Naive thymus-derived CD4-positive, alpha-beta T cell (primary cell): ENCODE measurements at regions of chr9 and their contacts with region 1.

Region 1: DNA sequence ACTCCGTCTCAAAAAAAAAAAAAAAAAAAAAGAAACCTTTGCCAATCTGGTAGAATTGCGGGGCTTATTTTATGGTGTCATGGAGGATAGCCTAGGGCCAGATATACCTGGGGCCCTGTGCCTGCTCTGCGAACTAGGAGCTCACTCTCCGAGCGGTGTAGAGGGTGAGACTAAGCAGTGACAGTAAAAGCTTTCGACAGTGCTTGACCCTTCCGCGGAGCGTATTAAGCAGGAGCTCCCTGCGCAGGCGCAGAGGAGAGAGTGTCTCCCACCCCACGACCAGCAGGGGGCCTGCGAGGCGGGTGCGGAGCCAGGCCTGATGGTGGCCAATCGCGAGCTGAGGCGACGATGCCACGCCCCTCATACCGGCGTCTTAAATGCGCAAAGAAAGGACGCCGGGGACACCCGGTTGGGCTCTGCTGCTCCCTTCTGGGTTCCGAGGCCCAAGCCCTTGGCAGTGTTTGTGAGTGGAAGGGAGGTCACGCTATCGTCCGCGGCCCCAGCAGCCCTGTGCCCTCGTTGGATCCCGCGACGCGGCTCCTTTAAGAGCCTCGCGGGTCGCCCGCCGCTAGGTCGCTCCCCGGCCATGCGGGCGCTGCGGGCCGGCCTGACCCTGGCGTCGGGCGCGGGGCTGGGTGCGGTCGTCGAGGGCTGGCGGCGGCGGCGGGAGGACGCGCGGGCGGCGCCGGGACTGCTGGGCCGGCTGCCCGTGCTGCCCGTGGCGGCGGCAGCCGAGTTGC is at the start of gene ENDOG:
- DNase-seq: peak; percentile 94 to 99 (median 97)
- ATAC-seq: peak; percentile 98
- H3K4me3 ChIP-seq: peak within 1 kb of the TSS; percentile 67
- H3K4me3 Mint-ChIP-seq: peak within 1 kb of the TSS; percentile 84 to 92 (median 91)
- H3K27ac ChIP-seq: peak within 1 kb of the TSS; percentile 72
- H3K27ac Mint-ChIP-seq: peak within 1 kb of the TSS; percentile 79 to 94 (median 87)
- H3K4me1 ChIP-seq: no peaks in the 10 kb centered on the region
- H3K4me1 Mint-ChIP-seq: peaks cover 7 to 29% (median 12%) of the 10 kb centered on the region in 7 donors
- H3K27me3 ChIP-seq: no peaks in the 10 kb centered on the region
- H3K27me3 Mint-ChIP-seq: no peaks in the 10 kb centered on the region
- total RNA-seq, gene ENDOG: 9.4 to 18.3 (median 14.7) TPM

Region 2: DNA sequence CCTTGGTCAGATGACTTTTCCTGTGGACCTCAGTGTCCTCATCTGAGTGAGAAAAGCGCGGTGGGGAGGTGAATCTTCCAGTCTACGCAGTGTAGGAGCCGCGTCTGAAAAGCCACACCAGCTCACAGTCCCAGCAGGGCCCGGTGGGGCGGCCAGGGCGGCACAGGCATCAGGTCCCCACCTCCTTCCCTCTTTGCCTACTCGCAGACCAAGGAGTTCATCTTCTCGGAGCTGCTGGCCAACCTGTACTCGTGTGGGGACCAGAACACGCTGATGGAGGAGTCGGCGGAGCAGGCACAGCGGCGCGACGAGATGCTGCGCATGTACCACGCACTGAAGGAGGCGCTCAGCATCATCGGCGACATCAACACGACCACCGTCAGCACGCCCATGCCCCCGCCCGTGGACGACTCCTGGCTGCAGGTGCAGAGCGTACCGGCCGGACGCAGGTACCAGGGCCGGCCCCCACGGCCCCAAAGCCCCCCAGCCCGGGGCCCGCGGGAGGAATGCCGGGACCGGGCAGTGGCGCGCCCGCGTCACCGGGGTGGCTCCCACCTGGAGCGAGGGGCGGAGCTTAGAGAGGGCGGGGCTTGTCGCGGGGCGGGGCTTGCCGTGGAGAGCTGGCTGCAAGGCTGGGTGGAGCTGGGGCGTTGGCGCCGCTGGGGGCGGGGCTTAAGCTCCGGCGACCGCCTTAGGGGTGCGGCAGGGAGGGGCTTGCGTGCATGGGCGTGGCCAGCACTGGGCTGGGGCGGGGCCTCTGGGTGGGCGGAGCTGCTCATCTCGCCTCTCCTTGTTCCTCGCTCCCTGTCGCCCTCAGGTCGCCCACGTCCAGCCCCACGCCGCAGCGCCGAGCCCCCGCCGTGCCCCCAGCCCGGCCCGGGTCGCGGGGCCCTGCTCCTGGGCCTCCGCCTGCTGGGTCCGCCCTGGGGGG is 568.1 kb before region 1 on chr9:
- CTCF ChIA-PET with region 1: no interaction called
- POLR2A ChIA-PET with region 1: no interaction called
- intact Hi-C with region 1: loop called in 1 of 2 experiments (anchors 1 kb)
- DNase-seq: peak; percentile 96 to 100 (median 98)
- ATAC-seq: peak; percentile 98
- H3K4me3 ChIP-seq: peak overlapping the region; percentile 83
- H3K4me3 Mint-ChIP-seq: peak overlapping the region; percentile 79 to 93 (median 88)
- H3K27ac ChIP-seq: peak overlapping the region; percentile 72
- H3K27ac Mint-ChIP-seq: peak overlapping the region; percentile 60 to 97 (median 95)
- H3K4me1 ChIP-seq: peaks cover 7 to 9% of the 10 kb centered on the region in 2 donors
- H3K4me1 Mint-ChIP-seq: peaks cover 7 to 28% (median 17%) of the 10 kb centered on the region in 7 donors
- H3K27me3 ChIP-seq: no peaks in the 10 kb centered on the region
- H3K27me3 Mint-ChIP-seq: peaks cover 0 to 39% (median 6%) of the 10 kb centered on the region in 5 donors

Region 3: DNA sequence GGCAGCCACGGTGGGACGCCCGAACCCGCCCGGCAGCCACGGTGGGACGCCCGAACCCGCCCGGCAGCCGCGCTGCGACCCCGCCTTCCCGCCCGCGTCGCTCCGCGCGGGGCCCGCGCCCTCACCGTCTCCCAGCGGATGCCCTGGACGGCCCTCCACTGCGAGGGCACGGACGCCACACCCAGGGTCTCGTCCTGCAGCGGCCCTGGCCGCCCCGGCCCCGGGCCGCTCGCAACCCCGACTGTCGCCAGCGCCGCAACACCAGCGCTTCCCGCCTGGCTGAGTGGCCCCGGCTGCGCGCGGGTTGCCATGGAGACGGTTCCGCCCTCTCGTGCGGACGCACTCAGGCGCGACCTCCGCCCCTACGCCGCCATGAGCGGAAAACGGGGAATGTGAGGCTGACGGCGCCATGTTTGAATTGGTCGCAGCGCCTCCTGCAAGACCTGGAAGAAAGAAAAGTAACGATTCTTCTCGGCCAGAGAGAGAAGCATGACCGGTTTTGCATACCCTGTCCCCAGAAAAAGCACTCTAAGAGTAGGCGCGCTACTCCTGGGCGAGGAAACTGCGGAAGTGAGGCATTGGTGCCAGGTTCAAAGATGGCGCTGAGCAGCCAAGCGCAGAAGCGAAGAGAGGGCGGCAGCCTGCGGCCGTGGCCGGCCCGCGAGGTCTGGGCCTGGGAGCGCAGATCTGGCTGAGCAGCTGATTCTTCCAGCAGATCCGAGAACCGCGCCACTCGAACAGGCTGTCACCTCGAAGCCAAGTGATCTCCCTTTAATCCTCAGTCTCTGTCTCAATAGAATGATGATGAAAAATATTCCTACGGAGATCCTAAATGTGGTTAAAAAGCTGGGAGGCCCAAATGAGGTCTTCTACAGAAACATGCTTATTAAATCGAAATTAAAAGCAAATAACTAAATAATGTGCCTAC is 161.6 kb before region 1 on chr9 and contains the start of gene DYNC2I2:
- CTCF ChIA-PET with region 1: interaction called, 3 read pairs
- POLR2A ChIA-PET with region 1: interaction called, 6 read pairs
- intact Hi-C with region 1: loop called (anchors 1 to 5 kb)
- DNase-seq: peak; percentile 91 to 96 (median 96)
- ATAC-seq: peak; percentile 98
- H3K4me3 ChIP-seq: peak within 1 kb of the TSS; percentile 96
- H3K4me3 Mint-ChIP-seq: peak within 1 kb of the TSS; percentile 88 to 98 (median 94)
- H3K27ac ChIP-seq: peak within 1 kb of the TSS; percentile 99
- H3K27ac Mint-ChIP-seq: peak within 1 kb of the TSS; percentile 95 to 100 (median 99)
- H3K4me1 ChIP-seq: peaks cover 3 to 9% of the 10 kb centered on the region in 2 donors
- H3K4me1 Mint-ChIP-seq: peaks cover 0 to 14% (median 7%) of the 10 kb centered on the region in 7 donors
- H3K27me3 ChIP-seq: no peaks in the 10 kb centered on the region
- H3K27me3 Mint-ChIP-seq: no peaks in the 10 kb centered on the region
- total RNA-seq, gene DYNC2I2: 2.5 to 41.7 (median 3.8) TPM

Region 4: DNA sequence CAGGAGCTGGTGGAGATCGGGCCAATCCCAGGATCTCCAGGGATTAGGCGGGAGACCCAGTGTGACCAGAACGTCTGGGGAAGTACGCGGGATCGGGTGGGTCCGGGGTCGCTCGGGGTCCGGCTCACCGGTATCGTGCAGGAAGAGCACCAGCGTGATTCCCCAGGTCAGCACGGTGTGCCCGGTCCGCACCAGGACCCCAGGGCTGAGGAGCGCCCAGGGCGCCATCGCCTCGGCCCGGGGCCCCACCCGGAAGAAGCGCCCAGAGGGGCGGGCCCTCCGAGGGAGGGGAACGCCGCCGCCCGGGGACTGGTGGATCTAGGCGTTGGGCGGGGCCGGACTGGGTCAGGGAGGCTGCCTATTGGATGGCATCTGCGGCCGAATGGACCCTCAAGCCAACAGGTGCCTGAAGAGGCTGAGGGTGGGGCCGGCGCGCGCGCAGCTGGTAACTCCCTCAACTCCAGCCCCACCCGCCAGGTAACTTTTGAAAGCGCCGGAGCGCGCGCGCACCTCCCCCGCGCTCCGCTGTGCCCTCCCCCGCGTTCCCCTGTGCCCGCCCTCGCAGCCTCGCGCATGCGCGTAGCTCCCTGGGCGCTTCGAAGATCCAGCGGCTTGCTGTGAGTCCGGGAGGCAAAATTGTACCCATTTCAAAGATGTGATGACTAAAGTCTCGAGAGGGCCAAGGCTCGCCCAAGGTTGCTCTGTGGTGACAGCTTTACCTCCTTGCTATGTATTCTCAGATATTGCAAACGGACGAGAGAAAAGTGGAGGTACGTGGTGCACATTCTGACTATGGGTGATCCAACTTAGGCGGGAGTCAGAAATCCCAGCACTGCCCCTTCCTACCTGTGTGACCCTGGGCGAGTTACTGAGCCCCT is 94.2 kb before region 1 on chr9 and contains the start of gene ZDHHC12:
- CTCF ChIA-PET with region 1: no interaction called
- POLR2A ChIA-PET with region 1: interaction called, 7 read pairs
- intact Hi-C with region 1: loop called in 1 of 2 experiments (anchors 1 kb)
- DNase-seq: peak; percentile 96 to 99 (median 99)
- ATAC-seq: peak; percentile 97
- H3K4me3 ChIP-seq: peak within 1 kb of the TSS; percentile 97
- H3K4me3 Mint-ChIP-seq: peak within 1 kb of the TSS; percentile 85 to 97 (median 94)
- H3K27ac ChIP-seq: peak within 1 kb of the TSS; percentile 89
- H3K27ac Mint-ChIP-seq: peak within 1 kb of the TSS; percentile 85 to 96 (median 94)
- H3K4me1 ChIP-seq: peaks cover 13 to 29% of the 10 kb centered on the region in 2 donors
- H3K4me1 Mint-ChIP-seq: peaks cover 23 to 46% (median 39%) of the 10 kb centered on the region in 7 donors
- H3K27me3 ChIP-seq: no peaks in the 10 kb centered on the region
- H3K27me3 Mint-ChIP-seq: no peaks in the 10 kb centered on the region
- total RNA-seq, gene ZDHHC12: 21.2 to 70.3 (median 25.7) TPM

Region 5: GRCh38 chr9:128786681-128787601 is 31.3 kb before region 1 on chr9 and contains the start of gene TBC1D13:
- CTCF ChIA-PET with region 1: no interaction called
- POLR2A ChIA-PET with region 1: interaction called, 9 read pairs
- intact Hi-C with region 1: loop called in 1 of 2 experiments (anchors 1 kb)
- DNase-seq: peak; percentile 88 to 93 (median 92)
- ATAC-seq: peak; percentile 99
- H3K4me3 ChIP-seq: peak within 1 kb of the TSS; percentile 90
- H3K4me3 Mint-ChIP-seq: peak within 1 kb of the TSS; percentile 80 to 98 (median 92)
- H3K27ac ChIP-seq: peak within 1 kb of the TSS; percentile 82
- H3K27ac Mint-ChIP-seq: peak within 1 kb of the TSS; percentile 87 to 98 (median 95)
- H3K4me1 ChIP-seq: peaks cover 13% of the 10 kb centered on the region in 2 donors
- H3K4me1 Mint-ChIP-seq: peaks cover 6 to 29% (median 23%) of the 10 kb centered on the region in 7 donors
- H3K27me3 ChIP-seq: no peaks in the 10 kb centered on the region
- H3K27me3 Mint-ChIP-seq: no peaks in the 10 kb centered on the region
- total RNA-seq, gene TBC1D13: 21.0 to 35.2 (median 24.9) TPM

Region 6: DNA sequence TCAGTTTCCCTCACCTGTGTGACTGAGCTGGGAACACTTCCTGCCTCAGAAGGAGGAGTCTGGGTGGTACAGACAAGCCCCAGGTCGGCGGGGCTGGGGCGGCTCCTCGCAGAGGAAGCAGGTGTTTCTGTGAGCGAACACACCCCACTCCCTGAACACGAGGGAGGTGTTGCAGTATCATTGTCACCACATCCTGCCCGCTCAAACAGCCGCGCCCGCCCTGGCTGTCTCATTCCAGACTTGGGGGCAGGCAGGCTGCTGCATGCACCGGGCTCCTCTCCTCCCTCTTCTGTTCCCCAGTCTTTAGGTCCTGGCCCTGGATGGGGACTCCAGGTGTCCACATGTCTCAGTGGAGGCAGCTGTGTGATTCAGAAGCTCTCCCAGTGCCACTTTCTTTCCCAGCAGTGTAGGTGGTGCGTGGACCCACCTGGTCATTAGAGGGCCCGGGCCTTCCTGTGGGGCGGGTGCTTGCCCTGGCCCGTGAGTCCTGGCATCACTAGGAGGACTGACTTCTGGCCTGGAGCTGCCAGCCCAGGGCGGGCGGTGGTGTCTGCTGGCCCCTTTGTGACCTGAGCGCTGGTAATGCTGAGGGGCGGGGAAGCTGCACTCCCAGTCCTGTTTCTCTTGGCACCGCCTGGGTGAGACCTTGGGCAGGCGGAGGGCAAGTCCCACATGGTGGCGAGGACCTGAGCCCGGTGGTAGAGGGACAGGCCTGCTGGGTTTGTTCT is 84.2 kb after region 1 on chr9:
- CTCF ChIA-PET with region 1: no interaction called
- POLR2A ChIA-PET with region 1: interaction called, 3 read pairs
- intact Hi-C with region 1: loop called in 1 of 2 experiments (anchors 1 kb)
- DNase-seq: peak; percentile 61 to 93 (median 90)
- ATAC-seq: peak; percentile 95
- H3K4me3 ChIP-seq: peak overlapping the region; percentile 55
- H3K4me3 Mint-ChIP-seq: peak overlapping the region; percentile 76 to 87 (median 84)
- H3K27ac ChIP-seq: peak overlapping the region; percentile 89
- H3K27ac Mint-ChIP-seq: peak overlapping the region; percentile 85 to 98 (median 96)
- H3K4me1 ChIP-seq: peaks cover 64 to 65% of the 10 kb centered on the region in 2 donors
- H3K4me1 Mint-ChIP-seq: peaks cover 32 to 84% (median 73%) of the 10 kb centered on the region in 7 donors
- H3K27me3 ChIP-seq: no peaks in the 10 kb centered on the region
- H3K27me3 Mint-ChIP-seq: no peaks in the 10 kb centered on the region

Region 7: DNA sequence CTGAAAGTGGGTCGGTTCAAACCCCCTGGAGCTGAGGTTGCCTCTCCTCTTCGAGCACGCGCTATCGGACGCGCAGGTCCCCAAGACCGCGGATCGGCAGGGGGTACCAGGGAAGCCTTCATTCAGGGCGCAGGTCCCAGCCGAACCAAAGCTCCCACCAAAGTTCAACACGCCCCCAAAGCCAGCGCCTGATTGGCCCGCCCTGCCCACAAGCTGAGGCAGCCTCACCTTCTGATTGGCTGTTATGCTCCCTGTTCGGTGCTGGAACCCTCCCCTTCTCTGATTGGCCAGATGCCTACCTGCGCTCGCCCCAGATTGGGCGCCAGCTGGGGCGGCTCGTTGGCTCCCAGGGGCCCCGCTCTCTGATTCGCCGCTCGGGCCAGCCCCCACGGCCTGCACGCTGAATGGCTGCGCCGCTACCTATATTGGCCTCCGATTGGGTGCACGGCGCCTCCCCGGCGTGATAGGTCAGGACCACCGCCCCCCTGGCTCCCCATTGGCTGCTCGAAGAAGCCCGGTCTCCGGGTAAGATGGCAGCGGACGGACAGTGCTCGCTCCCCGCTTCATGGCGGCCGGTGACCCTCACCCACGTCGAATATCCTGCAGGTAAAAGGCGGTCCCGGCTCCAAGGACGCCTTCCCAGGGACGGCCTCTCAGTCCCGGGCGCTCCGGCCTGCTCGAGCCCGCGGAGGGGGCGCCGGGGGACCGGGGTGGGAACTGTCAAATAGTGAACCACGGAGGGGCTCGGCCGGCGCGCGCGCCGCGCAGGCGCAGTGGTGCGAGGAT is 262.5 kb after region 1 on chr9 and contains the start of gene DOLPP1:
- CTCF ChIA-PET with region 1: no interaction called
- POLR2A ChIA-PET with region 1: no interaction called
- intact Hi-C with region 1: loop called in 1 of 2 experiments (anchors 2 kb)
- DNase-seq: peak; percentile 96 to 99 (median 99)
- ATAC-seq: peak; percentile 97
- H3K4me3 ChIP-seq: peak within 1 kb of the TSS; percentile 82
- H3K4me3 Mint-ChIP-seq: peak within 1 kb of the TSS; percentile 88 to 94 (median 90)
- H3K27ac ChIP-seq: peak within 1 kb of the TSS; percentile 79
- H3K27ac Mint-ChIP-seq: peak within 1 kb of the TSS; percentile 69 to 93 (median 87)
- H3K4me1 ChIP-seq: peaks cover 19 to 20% of the 10 kb centered on the region in 2 donors
- H3K4me1 Mint-ChIP-seq: peaks cover 6 to 41% (median 26%) of the 10 kb centered on the region in 7 donors
- H3K27me3 ChIP-seq: no peaks in the 10 kb centered on the region
- H3K27me3 Mint-ChIP-seq: no peaks in the 10 kb centered on the region
- total RNA-seq, gene DOLPP1: 5.7 to 17.1 (median 11.9) TPM